ENCODE measurements at regions of chr7 and their contacts with region 1.

Region 1: GRCh38 chr7:30465046-30465810 is 13.4 kb downstream of the NOD1 start:
- DNase-seq: no peak
- H3K4me3 ChIP-seq: no peak overlapping the region
- H3K27ac ChIP-seq: no peak overlapping the region
- H3K4me1 ChIP-seq: peaks cover 18% of the 10 kb centered on the region
- H3K27me3 ChIP-seq: no peaks in the 10 kb centered on the region
- CTCF ChIP-seq: no peak

Region 2: DNA sequence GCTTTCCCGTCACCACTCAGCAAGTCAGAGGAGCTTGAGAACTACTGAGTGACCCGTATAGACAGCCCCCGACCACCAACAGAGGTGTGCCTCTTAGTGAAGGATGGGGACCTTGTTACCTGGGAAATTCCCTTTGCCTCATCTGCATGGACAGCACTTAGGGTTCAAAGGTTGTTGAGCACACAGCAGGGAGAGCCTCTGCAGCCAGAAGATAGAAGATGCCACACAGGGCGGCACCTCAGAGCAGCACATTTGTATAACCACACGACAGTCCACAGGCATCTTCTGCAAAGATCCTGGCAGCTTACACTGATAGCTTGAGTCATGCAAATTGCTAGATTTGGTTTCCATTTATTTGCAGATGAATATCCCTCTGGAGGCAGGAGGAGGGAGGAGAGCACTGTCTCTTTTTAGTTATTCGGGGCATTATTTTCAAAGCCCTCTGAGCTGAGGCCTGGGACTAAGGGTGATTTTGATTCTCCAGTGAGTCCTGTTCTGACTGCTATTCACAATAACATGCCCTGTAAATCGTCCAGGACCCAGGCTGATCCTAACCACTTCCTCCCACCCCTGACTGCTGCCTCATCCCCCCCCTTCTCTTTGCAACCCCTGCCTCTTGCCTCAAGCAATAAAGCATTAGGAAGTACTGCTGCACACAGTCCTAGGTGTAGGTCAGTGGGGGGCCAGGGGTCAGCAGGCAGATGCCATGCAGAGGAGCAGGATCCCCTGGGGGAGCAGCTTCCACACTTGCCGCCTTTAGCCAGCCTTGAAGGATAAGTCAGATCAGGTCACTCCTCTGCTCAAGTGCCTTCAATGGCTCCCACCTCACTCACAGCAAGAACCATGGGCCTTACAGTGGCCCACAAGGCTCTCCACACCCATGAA is 262.1 kb after region 1 on chr7:
- CTCF ChIA-PET with region 1: no interaction called
- POLR2A ChIA-PET with region 1: no interaction called
- intact Hi-C with region 1: no loop called
- DNase-seq: no peak
- H3K4me3 ChIP-seq: no peak overlapping the region
- H3K27ac ChIP-seq: no peak overlapping the region
- H3K4me1 ChIP-seq: no peaks in the 10 kb centered on the region
- H3K27me3 ChIP-seq: peaks cover 91% of the 10 kb centered on the region
- CTCF ChIP-seq: no peak

Region 3: GRCh38 chr7:30771174-30771879 is 306.1 kb after region 1 on chr7 and contains the start of gene MINDY4:
- CTCF ChIA-PET with region 1: no interaction called
- POLR2A ChIA-PET with region 1: interaction called, 28 read pairs
- intact Hi-C with region 1: no loop called
- DNase-seq: peak; percentile 65 to 88
- H3K4me3 ChIP-seq: peak within 1 kb of the TSS; percentile 91
- H3K27ac ChIP-seq: no peak within 1 kb of the TSS
- H3K4me1 ChIP-seq: peaks cover 25% of the 10 kb centered on the region
- H3K27me3 ChIP-seq: no peaks in the 10 kb centered on the region
- CTCF ChIP-seq: no peak; the same call in 1 of the 2 replicates
- total RNA-seq, gene MINDY4: 11.5 and 14.8 TPM in 2 replicates